Activated T-helper 1 cell treated with anti-CD3 and anti-CD28 coated beads, Interleukin-12 subunit alpha, Interleukin-12 subunit beta, Interleukin-2, Interleukin-4 antibody, amounts not matched to agents 30 ng/mL and 10 ng/mL and 1 ng/mL, durations not matched to agents 14 hours and 24 hours and 36 hours (primary cell): ENCODE measurements at regions of chr17 and their contacts with region 1.

Region 1: GRCh38 chr17:49646391-49647255 is 31.3 kb downstream of the SPOP start:
- DNase-seq: peak; percentile 22
- H3K4me3 Mint-ChIP-seq: peak overlapping the region; percentile 30
- H3K27ac Mint-ChIP-seq: peak overlapping the region; percentile 67
- H3K4me1 Mint-ChIP-seq: peaks cover 44% of the 10 kb centered on the region
- H3K27me3 Mint-ChIP-seq: no peaks in the 10 kb centered on the region

Region 2: DNA sequence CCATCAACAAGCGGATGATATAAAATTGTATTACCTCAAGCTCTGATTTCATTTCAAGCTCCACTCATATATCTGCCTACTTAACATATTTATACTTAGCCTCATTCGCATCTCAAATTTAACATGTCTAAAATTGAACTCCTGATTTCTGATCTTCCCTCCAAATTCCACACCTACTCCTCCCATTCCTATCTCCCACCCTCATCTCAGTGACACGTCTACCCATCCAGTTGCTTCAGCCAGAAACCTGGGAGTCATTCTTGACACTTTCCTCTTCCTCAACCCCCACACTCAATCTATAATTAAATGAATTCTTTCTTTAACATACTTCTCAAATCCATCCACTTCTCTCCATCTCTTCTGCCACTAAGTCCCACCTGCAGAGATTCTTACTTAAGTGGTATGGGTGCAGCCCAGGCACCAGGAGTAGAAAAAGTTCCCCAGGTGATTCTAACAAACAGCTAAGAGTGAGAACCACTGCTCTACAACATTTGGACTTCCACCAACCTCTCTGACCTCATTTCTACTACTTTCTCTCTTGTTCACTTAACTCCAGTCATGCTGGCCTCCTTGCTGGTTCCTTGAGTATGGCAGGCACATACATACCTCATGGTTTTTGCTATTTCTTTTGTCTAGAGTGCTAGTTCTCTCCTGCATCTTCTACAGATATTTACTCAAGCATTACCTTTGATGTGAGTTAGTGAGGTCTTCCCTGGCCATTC is 13.2 kb after region 1 on chr17:
- intact Hi-C with region 1: no loop called
- DNase-seq: no peak
- H3K4me3 Mint-ChIP-seq: no peak overlapping the region
- H3K27ac Mint-ChIP-seq: no peak overlapping the region
- H3K4me1 Mint-ChIP-seq: peaks cover 23% of the 10 kb centered on the region
- H3K27me3 Mint-ChIP-seq: no peaks in the 10 kb centered on the region

Region 3: GRCh38 chr17:49677933-49678847 is 31.6 kb after region 1 on chr17 and contains the start of gene SPOP:
- intact Hi-C with region 1: loop called (anchors 1 kb)
- DNase-seq: peak; percentile 99
- H3K4me3 Mint-ChIP-seq: peak within 1 kb of the TSS; percentile 91
- H3K27ac Mint-ChIP-seq: peak within 1 kb of the TSS; percentile 99
- H3K4me1 Mint-ChIP-seq: peaks cover 41% of the 10 kb centered on the region
- H3K27me3 Mint-ChIP-seq: peaks cover 5% of the 10 kb centered on the region
- total RNA-seq, gene SPOP: 58.3 and 61.9 TPM in 2 replicates

Region 4: DNA sequence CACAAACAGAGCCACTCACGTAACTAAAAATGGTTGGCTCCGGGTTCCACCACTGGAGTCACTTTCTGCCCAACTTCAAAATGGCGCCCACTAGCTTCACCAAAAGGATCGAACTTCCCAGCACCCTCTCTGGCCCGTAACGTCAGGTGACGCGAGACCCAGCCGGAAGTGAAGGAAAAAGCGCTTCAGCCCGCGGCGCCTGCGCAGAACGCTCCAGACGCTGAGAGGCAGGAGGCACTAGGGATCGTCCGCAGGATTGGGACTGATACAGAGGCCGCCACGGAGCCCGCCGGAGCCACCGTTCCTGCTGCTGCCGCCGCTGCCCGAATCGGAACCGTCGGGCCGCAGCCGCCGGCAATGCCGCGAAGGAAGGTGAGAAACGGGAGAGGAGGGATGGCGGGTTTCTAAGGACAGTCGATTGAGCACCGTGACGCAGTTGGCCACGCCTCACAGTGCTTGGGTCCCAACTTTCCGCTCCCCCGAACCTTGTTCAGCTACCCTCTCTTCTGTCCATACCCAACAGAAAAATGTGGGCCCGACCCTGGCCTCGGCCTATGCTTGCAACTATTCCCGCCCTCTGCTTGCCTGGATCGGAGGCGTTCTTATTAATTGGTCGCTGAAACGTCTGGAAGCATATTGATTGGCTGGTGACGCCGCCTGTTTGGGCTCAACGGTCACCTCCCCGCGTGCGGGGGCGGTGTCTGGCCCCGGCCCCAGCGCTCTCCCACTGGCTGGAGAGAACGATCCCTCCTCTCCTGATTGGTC is 142.0 kb after region 1 on chr17 and contains the start of gene KAT7:
- intact Hi-C with region 1: no loop called
- DNase-seq: peak; percentile 99
- H3K4me3 Mint-ChIP-seq: peak within 1 kb of the TSS; percentile 94
- H3K27ac Mint-ChIP-seq: peak within 1 kb of the TSS; percentile 99
- H3K4me1 Mint-ChIP-seq: peaks cover 35% of the 10 kb centered on the region
- H3K27me3 Mint-ChIP-seq: no peaks in the 10 kb centered on the region
- total RNA-seq, gene KAT7: 68.5 and 71.1 TPM in 2 replicates

Region 5: DNA sequence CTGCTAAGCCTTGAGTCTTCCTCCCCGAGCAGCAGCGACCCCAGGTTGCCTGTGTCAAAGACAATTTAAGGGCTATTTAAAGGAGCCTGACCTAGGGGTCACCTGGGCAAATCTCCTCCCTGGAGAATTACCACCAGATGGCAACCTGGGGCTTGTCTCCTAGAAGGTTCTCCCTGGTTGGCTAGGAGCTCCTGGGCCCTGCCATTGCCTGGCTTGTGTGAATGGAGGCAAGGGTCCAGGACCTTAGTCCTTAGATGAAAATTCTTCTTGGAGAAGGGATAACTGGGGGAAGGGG is 252.5 kb after region 1 on chr17:
- intact Hi-C with region 1: no loop called
- DNase-seq: no peak
- H3K4me3 Mint-ChIP-seq: no peak overlapping the region
- H3K27ac Mint-ChIP-seq: no peak overlapping the region
- H3K4me1 Mint-ChIP-seq: no peaks in the 10 kb centered on the region
- H3K27me3 Mint-ChIP-seq: peaks cover 59% of the 10 kb centered on the region

Region 6: GRCh38 chr17:49910094-49910857 is 263.7 kb after region 1 on chr17:
- intact Hi-C with region 1: no loop called
- DNase-seq: no peak
- H3K4me3 Mint-ChIP-seq: peak overlapping the region; percentile 26
- H3K27ac Mint-ChIP-seq: no peak overlapping the region
- H3K4me1 Mint-ChIP-seq: no peaks in the 10 kb centered on the region
- H3K27me3 Mint-ChIP-seq: peaks cover 52% of the 10 kb centered on the region